Activated CD4-positive, alpha-beta T cell treated with anti-CD3 and anti-CD28 coated beads, Interleukin-2, amount 10 ng/mL, durations not matched to agents 24 days and 14 days (primary cell): ENCODE measurements at regions of chr15 and their contacts with region 1.

Region 1: GRCh38 chr15:45166834-45167630 is 20.7 kb downstream of the SHF start:
- DNase-seq: peak; percentile 94
- H3K4me3 Mint-ChIP-seq: peak overlapping the region; percentile 73
- H3K27ac Mint-ChIP-seq: peak overlapping the region; percentile 84
- H3K4me1 Mint-ChIP-seq: peaks cover 19% of the 10 kb centered on the region
- H3K27me3 Mint-ChIP-seq: no peaks in the 10 kb centered on the region

Region 2: DNA sequence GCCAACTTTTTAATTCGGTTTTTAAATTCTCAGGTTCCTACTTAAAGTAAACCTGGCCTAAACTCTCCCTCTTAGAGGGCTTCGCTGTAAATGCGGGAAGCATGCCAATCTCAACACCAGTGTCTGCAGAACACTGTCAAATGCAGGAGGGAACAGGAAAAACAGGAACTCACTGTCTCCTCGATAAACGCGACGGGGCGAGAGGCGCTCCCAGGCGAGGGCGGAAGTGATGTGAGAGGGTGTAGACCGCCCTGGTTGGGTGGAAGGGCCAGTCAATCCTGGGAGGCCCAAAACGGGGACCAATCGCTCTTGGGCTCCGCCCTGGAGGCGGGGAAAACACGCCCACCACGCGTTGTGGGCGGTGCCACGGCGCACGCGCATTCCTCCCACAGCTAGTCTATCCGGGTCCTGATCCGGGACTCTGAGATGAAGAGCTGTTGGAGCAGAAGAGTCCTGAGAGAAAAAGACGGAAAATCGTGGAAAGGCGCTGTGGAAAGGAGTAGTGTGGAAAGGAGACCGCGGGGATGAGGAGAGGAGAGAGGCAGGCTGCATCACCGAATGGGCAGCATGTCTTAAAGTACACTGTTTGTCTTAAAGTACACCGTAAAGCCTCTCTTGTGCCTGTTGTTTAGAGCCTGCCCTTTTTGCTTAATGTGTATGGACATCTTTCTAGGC is 112.1 kb after region 1 on chr15:
- intact Hi-C with region 1: loop called (anchors 2 kb)
- DNase-seq: peak; percentile 99
- H3K4me3 Mint-ChIP-seq: peak overlapping the region; percentile 84
- H3K27ac Mint-ChIP-seq: peak overlapping the region; percentile 83
- H3K4me1 Mint-ChIP-seq: peaks cover 15% of the 10 kb centered on the region
- H3K27me3 Mint-ChIP-seq: peaks cover 6% of the 10 kb centered on the region